Esophagus muscularis mucosa (tissue), 4 donors: ENCODE measurements at regions of chr15 and their contacts with region 1.

Region 1: DNA sequence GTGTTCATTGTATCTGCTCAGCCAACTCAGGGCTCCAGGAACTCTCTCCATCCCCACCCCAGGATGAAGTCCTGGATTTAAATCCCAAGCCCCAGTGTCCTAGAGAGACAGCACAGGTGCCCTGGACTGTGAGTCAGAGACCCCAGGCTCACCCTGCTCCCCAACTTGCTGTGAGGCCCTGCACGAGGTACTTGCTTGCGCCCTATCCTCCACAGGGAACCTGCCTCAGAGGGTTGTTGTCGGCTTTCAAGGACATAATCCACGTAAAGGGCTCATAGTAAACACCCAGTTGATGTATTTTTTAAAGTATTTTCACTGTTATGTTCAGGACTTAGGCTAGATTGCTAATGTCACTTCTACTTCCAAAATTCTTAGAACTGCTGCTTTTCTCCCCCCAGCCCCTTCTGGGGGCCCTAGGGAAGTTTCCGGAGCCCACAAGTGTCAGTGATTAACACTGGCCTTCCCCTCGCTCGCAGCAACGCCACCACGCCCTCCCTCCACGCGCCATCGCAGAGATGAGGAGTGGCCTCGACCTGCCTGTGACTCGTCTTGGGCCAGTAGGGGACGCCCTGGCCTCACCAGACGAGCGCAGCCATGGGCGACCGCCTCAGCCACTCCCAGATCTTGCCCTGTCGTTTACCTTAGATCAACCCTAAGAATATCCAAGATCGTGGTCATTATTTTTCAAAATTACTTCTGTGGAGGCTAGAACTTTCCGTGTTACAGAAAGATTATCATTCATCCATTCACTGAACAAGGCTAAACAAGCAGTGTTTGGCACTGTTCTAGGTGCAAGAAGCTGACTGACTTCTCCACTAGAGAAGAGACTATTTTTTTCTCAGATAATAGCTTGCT is 6.0 kb upstream of the SRP14 start:
- DNase-seq: peak; percentile 95
- H3K4me3 ChIP-seq: peak overlapping the region; percentile 5 to 34 (median 24)
- H3K27ac ChIP-seq: peak overlapping the region; percentile 31 to 57 (median 57)
- H3K4me1 ChIP-seq: peaks cover 37 to 57% (median 50%) of the 10 kb centered on the region in 4 donors
- H3K27me3 ChIP-seq: no peaks in the 10 kb centered on the region
- CTCF ChIP-seq: peak; percentile 87 to 97 (median 94)
- EP300 ChIP-seq: no peak
- POLR2A ChIP-seq: no peak

Region 2: GRCh38 chr15:39896846-39897245 is 148.1 kb before region 1 on chr15:
- intact Hi-C with region 1: no loop called
- DNase-seq: no peak
- H3K4me3 ChIP-seq: no peak overlapping the region
- H3K27ac ChIP-seq: no peak overlapping the region
- H3K4me1 ChIP-seq: no peaks in the 10 kb centered on the region
- H3K27me3 ChIP-seq: no peaks in the 10 kb centered on the region
- CTCF ChIP-seq: no peak
- EP300 ChIP-seq: no peak
- POLR2A ChIP-seq: no peak

Region 3: DNA sequence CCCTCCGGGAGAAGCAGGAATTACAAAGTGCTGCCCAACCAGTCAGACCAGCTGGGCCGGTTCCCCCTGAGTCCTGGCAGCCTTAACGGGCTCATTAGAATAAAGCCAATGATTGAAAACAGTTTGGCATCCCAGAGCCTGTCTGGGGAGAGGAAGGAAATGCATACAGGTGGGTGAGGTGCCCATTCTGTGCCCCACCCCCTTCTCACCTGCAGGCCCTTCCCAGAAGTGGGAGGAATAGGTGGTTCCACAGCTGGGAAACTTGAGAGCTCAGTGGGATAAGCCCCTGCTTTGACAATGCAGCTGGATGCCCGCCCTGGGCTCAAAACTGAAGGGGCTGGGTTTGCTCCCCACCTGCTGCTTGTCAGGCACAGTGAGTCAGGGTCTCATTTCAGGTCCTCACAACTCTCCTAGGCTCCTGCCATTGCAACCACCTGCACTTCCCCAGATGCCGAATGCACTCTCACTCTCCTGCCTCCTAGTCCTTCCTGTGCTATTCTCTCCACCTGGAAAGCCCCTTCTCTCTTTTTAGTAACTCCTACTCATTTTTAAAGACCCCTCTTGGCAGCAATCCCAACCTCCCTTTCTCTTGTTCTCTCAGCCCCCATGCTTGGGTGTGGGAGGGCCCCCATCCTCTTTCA is 110.4 kb after region 1 on chr15:
- intact Hi-C with region 1: loop called (anchors 5 kb)
- DNase-seq: peak; percentile 53
- H3K4me3 ChIP-seq: no peak overlapping the region
- H3K27ac ChIP-seq: no peak overlapping the region
- H3K4me1 ChIP-seq: peaks cover under 1 to 2% (median 1%) of the 10 kb centered on the region in 4 donors
- H3K27me3 ChIP-seq: no peaks in the 10 kb centered on the region
- CTCF ChIP-seq: no peak
- EP300 ChIP-seq: no peak
- POLR2A ChIP-seq: no peak

Region 4: DNA sequence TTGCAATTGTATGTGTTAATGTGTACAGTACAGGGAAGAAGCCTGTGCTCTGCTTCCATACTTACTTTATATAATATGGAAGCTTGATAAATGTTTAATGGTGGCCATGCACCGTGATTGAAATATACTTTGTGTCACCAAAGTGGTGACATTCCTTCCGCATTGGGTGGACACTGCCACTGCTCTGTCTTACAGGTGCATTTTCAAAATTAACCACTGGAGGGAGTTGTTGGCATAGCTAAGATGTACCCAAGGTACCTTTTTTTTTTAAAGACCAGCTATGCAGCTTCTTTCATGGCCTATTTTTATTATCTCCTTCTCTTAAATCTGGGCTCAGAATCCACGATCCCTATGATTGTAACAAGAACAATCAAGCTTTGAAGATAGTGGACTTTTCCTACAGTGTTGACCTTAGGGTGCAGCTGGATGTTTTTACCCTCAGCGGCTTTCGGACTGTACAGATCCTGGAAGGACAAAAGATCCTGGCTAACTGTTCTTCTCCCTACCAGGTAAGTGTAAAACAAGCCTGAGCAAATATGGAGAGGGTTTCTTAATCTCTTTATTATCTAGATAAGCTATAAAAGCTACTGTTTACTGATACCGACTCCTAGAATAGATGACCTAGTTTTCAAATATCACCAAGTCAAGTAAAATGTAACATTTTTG is 172.3 kb after region 1 on chr15:
- intact Hi-C with region 1: loop called (anchors 5 kb)
- DNase-seq: no peak
- H3K4me3 ChIP-seq: no peak overlapping the region
- H3K27ac ChIP-seq: no peak overlapping the region
- H3K4me1 ChIP-seq: no peaks in the 10 kb centered on the region
- H3K27me3 ChIP-seq: no peaks in the 10 kb centered on the region
- CTCF ChIP-seq: peak; percentile 85 to 93 (median 87)
- EP300 ChIP-seq: no peak
- POLR2A ChIP-seq: no peak

Region 5: GRCh38 chr15:40274350-40275274 is 229.7 kb after region 1 on chr15:
- intact Hi-C with region 1: loop called (anchors 2 kb)
- DNase-seq: peak; percentile 96
- H3K4me3 ChIP-seq: no peak overlapping the region
- H3K27ac ChIP-seq: no peak overlapping the region
- H3K4me1 ChIP-seq: peaks cover 4 to 7% (median 5%) of the 10 kb centered on the region in 4 donors
- H3K27me3 ChIP-seq: peaks cover 0 to 27% (median 3%) of the 10 kb centered on the region in 4 donors
- CTCF ChIP-seq: peak in 2 of 3 experiments; percentile 100
- EP300 ChIP-seq: no peak
- POLR2A ChIP-seq: no peak